Heart left ventricle (tissue), 16 donors: ENCODE measurements at regions of chr9 and their contacts with region 1.

Region 1: GRCh38 chr9:129413537-129414376 is 207.1 kb downstream of the C9orf50 start:
- DNase-seq: peak; percentile 99 to 100 (median 99)
- ATAC-seq: peak; percentile 57 to 87 (median 86)
- H3K4me3 ChIP-seq: peak overlapping the region; percentile 28 to 71 (median 58)
- H3K27ac ChIP-seq: peak overlapping the region; percentile 94 to 100 (median 100)
- H3K4me1 ChIP-seq: peaks cover 4 to 56% (median 32%) of the 10 kb centered on the region in 12 donors
- H3K27me3 ChIP-seq: no peaks in the 10 kb centered on the region
- CTCF ChIP-seq: peak in 1 of 12 donors; percentile 13
- POLR2A ChIP-seq: peak; percentile 41 to 85

Region 2: GRCh38 chr9:129177791-129178559 is 235.8 kb before region 1 on chr9 and contains the start of gene IER5L:
- intact Hi-C with region 1: loop called in 5 of 10 experiments (anchors 1 to 10 kb)
- DNase-seq: peak; percentile 94 to 98 (median 97)
- ATAC-seq: peak; percentile 85 to 90 (median 89)
- H3K4me3 ChIP-seq: peak within 1 kb of the TSS; percentile 77 to 99 (median 95)
- H3K27ac ChIP-seq: peak within 1 kb of the TSS; percentile 81 to 100 (median 99)
- H3K4me1 ChIP-seq: peaks cover 3 to 43% (median 25%) of the 10 kb centered on the region in 12 donors
- H3K27me3 ChIP-seq: no peaks in the 10 kb centered on the region
- CTCF ChIP-seq: no peak
- POLR2A ChIP-seq: peak; percentile 90 to 99
- total RNA-seq, gene IER5L: 4.1 to 18.4 (median 5.5) TPM

Region 3: DNA sequence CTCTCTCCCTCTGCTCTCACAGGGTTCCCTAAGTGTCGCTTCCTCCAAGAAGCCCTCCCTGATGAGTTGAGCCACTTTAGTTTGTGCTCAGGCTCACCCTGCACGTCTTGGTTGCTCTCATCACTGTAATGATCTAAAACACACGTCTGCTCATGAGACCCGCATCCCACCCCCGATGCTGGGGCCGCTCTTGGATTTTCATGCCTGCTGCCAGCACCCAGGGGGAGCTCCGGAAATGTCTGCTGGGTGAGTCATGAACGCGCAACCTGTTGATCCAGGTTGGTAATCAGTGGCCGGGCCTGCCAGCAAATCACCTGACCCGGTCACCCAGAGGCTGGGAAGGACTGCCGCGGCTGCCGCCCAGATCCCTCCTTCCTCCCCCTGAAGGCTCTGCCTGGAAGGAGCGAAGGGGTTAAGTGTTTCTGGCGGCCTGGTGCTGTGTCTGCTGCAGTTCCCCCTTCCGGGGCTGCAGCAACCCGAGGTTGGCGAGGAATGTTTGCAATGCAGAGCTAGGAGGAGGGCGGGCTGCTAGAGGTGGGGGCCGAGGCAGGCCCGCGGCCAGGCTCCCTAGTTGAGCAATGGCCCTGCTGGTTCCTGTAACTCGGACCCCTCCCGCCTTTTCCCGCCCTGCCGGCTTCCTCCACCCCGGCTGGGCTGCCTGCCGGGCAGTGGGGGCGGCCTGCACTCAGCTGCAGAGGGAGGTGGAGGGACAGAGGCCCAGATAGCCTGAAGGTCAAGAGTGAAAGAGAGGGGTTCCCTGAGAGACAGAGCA is 79.6 kb before region 1 on chr9:
- intact Hi-C with region 1: loop called in 2 of 10 experiments (anchors 5 kb)
- DNase-seq: peak; percentile 92 to 95 (median 94)
- ATAC-seq: peak; percentile 85 to 94 (median 89)
- H3K4me3 ChIP-seq: peak overlapping the region in 9 of 12 donors; percentile 16 to 40 (median 25)
- H3K27ac ChIP-seq: peak overlapping the region; percentile 39 to 97 (median 88)
- H3K4me1 ChIP-seq: peaks cover 12 to 65% (median 43%) of the 10 kb centered on the region in 12 donors
- H3K27me3 ChIP-seq: no peaks in the 10 kb centered on the region
- CTCF ChIP-seq: no peak
- POLR2A ChIP-seq: peak in 1 of 2 donors; percentile 46

Region 4: GRCh38 chr9:129352146-129352865 is 61.5 kb before region 1 on chr9:
- intact Hi-C with region 1: no loop called
- DNase-seq: no peak
- ATAC-seq: peak in 1 of 4 donors; percentile 28
- H3K4me3 ChIP-seq: peak overlapping the region in 11 of 12 donors; percentile 11 to 50 (median 44)
- H3K27ac ChIP-seq: peak overlapping the region in 10 of 12 donors; percentile 13 to 74 (median 58)
- H3K4me1 ChIP-seq: peaks cover 0 to 36% (median 16%) of the 10 kb centered on the region in 12 donors
- H3K27me3 ChIP-seq: peaks cover 0 to 10% (median 6%) of the 10 kb centered on the region in 9 donors
- CTCF ChIP-seq: no peak
- POLR2A ChIP-seq: no peak

Region 5: GRCh38 chr9:129460323-129461261 is 46.8 kb after region 1 on chr9:
- intact Hi-C with region 1: loop called in 5 of 10 experiments (anchors 1 to 5 kb)
- DNase-seq: peak; percentile 97 to 99 (median 98)
- ATAC-seq: peak; percentile 86 to 94 (median 92)
- H3K4me3 ChIP-seq: peak overlapping the region; percentile 16 to 60 (median 51)
- H3K27ac ChIP-seq: peak overlapping the region; percentile 91 to 100 (median 98)
- H3K4me1 ChIP-seq: peaks cover 9 to 52% (median 43%) of the 10 kb centered on the region in 12 donors
- H3K27me3 ChIP-seq: no peaks in the 10 kb centered on the region
- CTCF ChIP-seq: peak in 8 of 12 donors; percentile 5 to 51 (median 28)
- POLR2A ChIP-seq: peak; percentile 39 to 79

Region 6: GRCh38 chr9:129487642-129488409 is 74.1 kb after region 1 on chr9:
- intact Hi-C with region 1: loop called in 6 of 10 experiments (anchors 1 to 10 kb)
- DNase-seq: peak; percentile 56 to 79 (median 72)
- ATAC-seq: peak in 2 of 4 donors; percentile 2 to 3
- H3K4me3 ChIP-seq: peak overlapping the region; percentile 21 to 68 (median 60)
- H3K27ac ChIP-seq: peak overlapping the region; percentile 93 to 100 (median 99)
- H3K4me1 ChIP-seq: peaks cover 23 to 93% (median 73%) of the 10 kb centered on the region in 12 donors
- H3K27me3 ChIP-seq: no peaks in the 10 kb centered on the region
- CTCF ChIP-seq: no peak
- POLR2A ChIP-seq: no peak